Activated naive CD4-positive, alpha-beta T cell treated with anti-CD3 and anti-CD28 coated beads for 36 hours (primary cell): ENCODE measurements at regions of chr15 and their contacts with region 1.

Region 1: DNA sequence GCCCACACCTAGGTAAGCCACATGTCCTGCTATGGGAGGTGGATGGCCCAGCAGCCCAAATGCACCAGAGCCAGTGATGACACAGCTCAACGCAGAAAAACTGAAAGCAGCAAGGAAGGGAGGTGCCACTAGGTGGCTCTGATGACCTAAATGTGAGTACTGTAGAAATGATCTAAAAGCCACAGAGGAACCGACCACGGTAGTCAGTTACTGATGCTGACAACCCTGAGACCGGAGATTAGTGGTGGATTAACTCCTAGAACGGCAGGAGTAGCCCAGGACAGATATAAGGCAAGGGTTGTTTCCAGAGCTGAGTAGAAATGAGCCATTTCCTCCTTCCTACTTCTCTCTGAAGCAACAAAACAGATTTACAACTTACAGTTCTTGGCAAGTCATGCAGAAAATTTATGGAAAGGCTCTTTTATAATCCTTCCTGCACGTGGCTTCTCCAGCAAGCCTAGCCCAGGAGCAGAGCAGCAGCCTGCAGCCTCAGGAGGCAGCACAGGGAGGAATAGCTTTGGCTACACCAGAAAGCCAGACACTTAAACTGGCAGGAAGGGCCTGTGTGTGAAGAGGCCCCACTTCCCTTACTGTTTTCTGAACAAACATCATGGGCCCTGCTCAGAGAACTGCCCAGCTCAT is 13.1 kb downstream of the FBXL22 start:
- DNase-seq: peak; percentile 91
- H3K4me3 Mint-ChIP-seq: no peak overlapping the region
- H3K27ac Mint-ChIP-seq: peak overlapping the region; percentile 83
- H3K4me1 Mint-ChIP-seq: peaks cover 24% of the 10 kb centered on the region
- H3K27me3 Mint-ChIP-seq: no peaks in the 10 kb centered on the region

Region 2: DNA sequence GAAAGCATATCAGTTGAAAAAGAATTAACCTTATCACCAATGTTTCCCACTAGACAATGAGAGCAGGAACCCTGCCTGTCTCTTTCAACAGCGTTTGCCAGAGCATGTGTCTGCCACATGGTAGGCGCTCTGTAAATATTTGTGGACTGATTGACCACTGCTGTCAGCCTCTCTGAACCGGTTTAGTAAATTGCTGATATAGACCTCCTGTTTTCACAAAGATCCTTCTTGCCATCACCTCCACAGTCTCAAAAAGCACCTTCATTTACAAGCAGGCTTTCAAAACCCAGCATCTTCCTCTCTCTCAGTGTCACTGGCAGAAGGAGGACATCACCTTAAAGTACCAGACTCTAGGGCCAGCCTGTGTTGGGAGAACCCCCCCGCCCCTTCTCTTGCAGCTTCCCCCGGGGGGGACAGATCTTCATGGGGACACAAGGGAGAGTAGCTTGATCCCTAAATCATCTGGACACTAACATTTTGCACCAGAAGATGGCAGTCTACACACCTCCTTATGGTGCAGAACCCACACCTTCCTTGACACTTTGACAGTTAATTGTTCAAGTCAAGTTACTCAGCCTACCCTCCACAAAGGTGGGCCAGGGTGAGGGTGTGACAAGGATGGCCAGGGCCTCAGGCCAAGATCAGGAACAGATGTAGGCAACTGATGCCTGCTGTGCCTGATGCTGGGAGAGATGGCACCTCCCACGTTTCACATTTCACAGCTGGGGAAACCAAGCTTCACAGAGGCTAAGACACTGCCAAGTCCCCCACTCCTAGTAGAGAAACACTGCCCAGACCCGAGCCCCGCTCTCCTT is 143.7 kb before region 1 on chr15:
- CTCF ChIA-PET with region 1: interaction called, 18 read pairs
- intact Hi-C with region 1: no loop called
- DNase-seq: peak; percentile 71
- H3K4me3 Mint-ChIP-seq: no peak overlapping the region
- H3K27ac Mint-ChIP-seq: no peak overlapping the region
- H3K4me1 Mint-ChIP-seq: peaks cover 23% of the 10 kb centered on the region
- H3K27me3 Mint-ChIP-seq: no peaks in the 10 kb centered on the region

Region 3: DNA sequence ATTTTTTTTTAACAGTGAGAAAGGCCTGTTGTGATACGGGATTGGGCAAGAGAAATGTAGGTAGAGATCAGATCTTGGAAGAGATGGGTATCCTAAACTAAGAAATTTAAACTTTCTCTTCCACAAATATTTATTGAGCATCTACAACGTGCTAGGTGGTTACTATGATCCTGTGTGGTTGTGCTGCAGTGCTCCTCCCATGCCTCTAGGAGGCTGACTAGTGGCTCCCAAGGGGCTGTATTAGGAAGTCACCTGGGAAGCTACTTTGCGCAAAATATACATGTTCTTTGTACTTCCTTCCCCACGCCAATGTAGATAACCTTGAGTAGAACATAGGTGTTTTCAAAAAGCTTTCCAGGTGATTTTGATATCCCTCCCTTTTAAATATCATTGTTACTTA is 78.7 kb before region 1 on chr15:
- CTCF ChIA-PET with region 1: no interaction called
- intact Hi-C with region 1: no loop called
- DNase-seq: no peak
- H3K4me3 Mint-ChIP-seq: no peak overlapping the region
- H3K27ac Mint-ChIP-seq: peak overlapping the region; percentile 69
- H3K4me1 Mint-ChIP-seq: peaks cover 86% of the 10 kb centered on the region
- H3K27me3 Mint-ChIP-seq: no peaks in the 10 kb centered on the region

Region 4: DNA sequence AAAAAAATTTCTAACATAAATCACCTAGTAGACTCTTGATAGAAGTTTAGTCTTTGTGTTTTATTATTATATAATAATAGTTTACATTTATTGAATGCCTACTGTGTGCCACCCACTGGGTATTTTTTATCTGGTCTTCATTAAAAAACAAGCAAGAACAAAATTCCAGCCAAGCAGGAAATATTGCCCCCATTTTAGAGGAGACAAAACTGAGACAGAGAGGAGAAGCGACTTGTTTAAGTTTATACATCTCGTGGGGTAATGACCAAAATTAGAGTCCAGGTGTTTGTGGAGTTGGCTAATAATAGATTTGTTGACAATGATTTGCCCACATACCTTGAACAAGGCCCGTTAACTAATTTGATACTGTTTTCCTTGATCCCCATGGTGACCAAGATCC is 46.2 kb before region 1 on chr15:
- CTCF ChIA-PET with region 1: no interaction called
- intact Hi-C with region 1: no loop called
- DNase-seq: no peak
- H3K4me3 Mint-ChIP-seq: no peak overlapping the region
- H3K27ac Mint-ChIP-seq: no peak overlapping the region
- H3K4me1 Mint-ChIP-seq: peaks cover 44% of the 10 kb centered on the region
- H3K27me3 Mint-ChIP-seq: no peaks in the 10 kb centered on the region

Region 5: DNA sequence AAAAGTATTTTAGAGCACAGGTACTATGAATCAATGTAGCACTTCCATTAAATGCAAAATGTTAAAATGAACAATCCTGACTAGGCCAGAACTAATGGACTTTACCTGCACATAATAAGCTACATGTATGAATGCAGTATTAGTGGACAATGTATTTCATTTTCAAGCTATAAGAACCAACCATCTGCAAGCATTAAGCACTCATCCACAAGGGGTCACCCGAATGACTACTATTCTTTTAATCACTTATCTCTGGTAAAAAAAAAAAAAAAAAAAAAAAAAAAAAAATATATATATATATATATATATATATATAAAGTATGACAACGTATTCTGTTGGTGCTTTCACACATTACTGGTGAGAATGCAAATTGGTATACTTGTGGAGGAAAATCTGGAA is 216.2 kb after region 1 on chr15:
- CTCF ChIA-PET with region 1: no interaction called
- intact Hi-C with region 1: loop called (anchors 2 kb)
- DNase-seq: peak; percentile 53
- H3K4me3 Mint-ChIP-seq: no peak overlapping the region
- H3K27ac Mint-ChIP-seq: peak overlapping the region; percentile 38
- H3K4me1 Mint-ChIP-seq: peaks cover 69% of the 10 kb centered on the region
- H3K27me3 Mint-ChIP-seq: no peaks in the 10 kb centered on the region

Region 6: GRCh38 chr15:64010719-64011118 is 400.4 kb after region 1 on chr15:
- CTCF ChIA-PET with region 1: no interaction called
- intact Hi-C with region 1: loop called (anchors 1 kb)
- DNase-seq: peak; percentile 85
- H3K4me3 Mint-ChIP-seq: no peak overlapping the region
- H3K27ac Mint-ChIP-seq: peak overlapping the region; percentile 66
- H3K4me1 Mint-ChIP-seq: peaks cover 28% of the 10 kb centered on the region
- H3K27me3 Mint-ChIP-seq: no peaks in the 10 kb centered on the region

Region 7: GRCh38 chr15:64060716-64061115 is 450.4 kb after region 1 on chr15:
- CTCF ChIA-PET with region 1: interaction called, 49 read pairs
- intact Hi-C with region 1: no loop called
- DNase-seq: no peak
- H3K4me3 Mint-ChIP-seq: no peak overlapping the region
- H3K27ac Mint-ChIP-seq: no peak overlapping the region
- H3K4me1 Mint-ChIP-seq: no peaks in the 10 kb centered on the region
- H3K27me3 Mint-ChIP-seq: no peaks in the 10 kb centered on the region

Region 8: DNA sequence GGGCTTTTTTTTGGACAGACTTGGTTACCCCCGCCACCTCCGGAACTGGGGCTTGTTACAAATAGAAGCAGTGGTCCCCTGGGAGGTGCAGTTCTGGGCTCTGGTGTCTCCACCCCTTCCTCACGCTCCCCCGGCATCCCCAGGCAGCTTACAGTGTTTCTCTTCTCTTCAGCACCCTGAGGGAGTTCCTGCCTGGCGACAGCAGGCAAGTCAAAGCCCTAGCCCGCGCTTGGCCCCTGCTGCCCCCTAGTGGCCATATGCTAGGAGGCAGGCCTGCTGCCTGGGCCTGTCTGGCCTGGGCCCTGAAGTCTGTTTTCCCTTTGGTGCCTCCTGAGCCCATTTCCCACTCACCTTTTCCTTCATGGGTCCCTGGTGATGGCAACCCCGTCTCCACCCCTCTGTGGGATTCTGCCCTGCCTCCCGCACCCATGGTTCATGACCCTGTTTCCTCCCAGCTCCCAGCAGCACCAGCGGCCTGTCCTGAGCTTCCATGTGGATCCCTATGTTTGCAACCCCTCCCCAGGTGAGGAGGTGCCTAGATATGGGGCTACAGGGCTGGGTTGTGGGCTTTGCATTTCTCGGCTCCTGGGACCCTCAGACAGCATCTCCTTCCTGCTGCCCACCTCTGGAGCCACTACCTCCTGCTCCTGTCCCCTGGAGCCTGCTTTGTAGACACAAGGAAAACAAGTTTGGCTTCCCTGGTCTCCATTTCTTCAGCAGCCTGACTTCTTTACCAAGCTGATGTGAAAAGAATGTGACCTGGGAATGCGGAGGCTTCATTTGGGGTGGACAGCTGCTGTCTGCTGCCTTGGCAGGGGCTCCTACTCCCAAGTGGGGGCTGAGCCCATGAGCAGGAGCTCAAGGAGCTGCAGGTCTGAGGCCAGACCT is 543.4 kb after region 1 on chr15:
- CTCF ChIA-PET with region 1: no interaction called
- intact Hi-C with region 1: loop called (anchors 2 kb)
- DNase-seq: peak; percentile 96
- H3K4me3 Mint-ChIP-seq: peak overlapping the region; percentile 50
- H3K27ac Mint-ChIP-seq: peak overlapping the region; percentile 67
- H3K4me1 Mint-ChIP-seq: peaks cover 26% of the 10 kb centered on the region
- H3K27me3 Mint-ChIP-seq: peaks cover 11% of the 10 kb centered on the region

Region 9: DNA sequence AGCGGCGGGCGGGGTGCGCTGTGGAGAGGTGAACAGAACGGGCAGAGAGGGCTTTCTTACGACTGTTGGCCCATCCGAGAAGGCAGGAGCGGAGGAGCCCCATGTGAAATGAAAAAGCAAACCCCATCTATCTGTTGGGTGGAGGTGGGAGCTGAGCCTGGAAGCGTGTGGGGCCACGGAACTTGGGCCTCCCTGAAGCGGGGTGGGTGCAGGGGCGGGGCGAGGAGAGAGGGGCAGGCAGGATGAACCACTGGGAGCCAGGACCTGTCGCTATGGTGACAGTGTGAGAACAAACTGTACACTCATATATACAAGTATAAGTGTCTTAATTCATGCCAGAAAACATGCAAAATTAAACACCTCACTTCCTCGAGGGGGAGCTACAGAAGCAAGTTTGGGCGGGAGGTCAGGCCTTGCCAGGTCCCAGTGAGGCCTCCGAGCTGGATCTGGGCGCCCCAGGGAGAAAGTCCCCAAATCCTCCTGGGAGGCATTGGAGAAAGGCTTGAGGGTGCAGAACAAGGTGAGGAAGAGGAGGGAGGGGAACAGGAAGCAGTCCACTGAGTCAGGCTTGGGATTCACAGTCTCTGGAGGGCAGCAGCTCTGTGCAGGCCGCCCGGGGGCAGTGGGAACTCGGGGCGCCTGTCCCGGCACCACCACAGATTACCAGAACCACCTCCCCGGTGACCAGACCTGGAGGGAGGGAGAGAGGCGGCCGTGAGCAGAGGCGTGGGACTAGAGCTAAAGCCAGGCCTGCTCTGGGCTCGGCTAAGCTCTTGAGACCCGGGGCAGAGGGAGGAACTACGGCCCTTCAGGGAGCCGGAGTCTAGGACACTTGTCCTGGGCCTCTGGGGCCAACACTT is 1130.2 kb after region 1 on chr15:
- CTCF ChIA-PET with region 1: no interaction called
- intact Hi-C with region 1: no loop called
- DNase-seq: no peak
- H3K4me3 Mint-ChIP-seq: no peak overlapping the region
- H3K27ac Mint-ChIP-seq: no peak overlapping the region
- H3K4me1 Mint-ChIP-seq: no peaks in the 10 kb centered on the region
- H3K27me3 Mint-ChIP-seq: no peaks in the 10 kb centered on the region